ENCODE measurements at regions of chr21 and their contacts with region 1.

Region 1: GRCh38 chr21:46025113-46025770 is 43.7 kb downstream of the COL6A1 start:
- DNase-seq: no peak
- ATAC-seq: no peak

Region 2: DNA sequence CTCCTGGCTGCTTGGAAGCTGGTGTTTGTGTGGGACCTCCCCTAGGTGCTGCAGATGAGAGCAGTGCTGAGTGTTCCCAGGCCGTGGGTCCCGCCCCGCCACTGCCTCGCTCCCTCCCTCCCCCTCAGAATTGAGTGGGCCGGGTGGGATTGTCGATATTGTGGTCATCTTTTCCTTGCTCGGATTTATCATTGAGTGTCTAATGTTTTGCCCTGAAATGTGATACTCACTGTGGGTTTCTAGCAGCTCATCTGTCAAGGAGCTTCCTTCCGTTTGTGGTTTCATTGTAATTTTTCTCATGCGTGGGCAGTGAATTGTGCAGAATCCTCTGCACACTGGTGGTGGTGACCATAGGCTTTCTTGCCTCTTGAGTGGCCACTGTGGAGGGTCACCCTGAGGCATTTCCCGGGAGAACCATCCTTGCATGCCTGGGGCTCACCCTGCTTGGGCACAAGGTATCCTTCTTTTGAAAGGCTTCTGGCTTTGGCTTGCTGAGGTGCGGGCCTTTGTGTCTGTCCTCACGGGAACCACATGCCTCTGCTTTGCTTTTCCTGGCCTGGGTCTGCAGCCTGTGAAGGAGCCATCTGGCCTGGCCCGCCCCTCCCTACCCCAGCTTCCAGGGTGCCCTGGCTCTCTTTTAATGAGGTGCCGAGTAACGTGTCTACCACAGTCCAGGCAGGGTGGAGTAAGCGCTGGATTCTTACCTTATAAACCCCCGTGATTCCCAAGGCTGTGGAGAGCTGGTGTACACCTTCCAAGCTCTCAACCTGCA is 1059.8 kb before region 1 on chr21:
- intact Hi-C with region 1: loop called (anchors 5 kb)
- DNase-seq: no peak
- ATAC-seq: peak; percentile 37

Region 3: DNA sequence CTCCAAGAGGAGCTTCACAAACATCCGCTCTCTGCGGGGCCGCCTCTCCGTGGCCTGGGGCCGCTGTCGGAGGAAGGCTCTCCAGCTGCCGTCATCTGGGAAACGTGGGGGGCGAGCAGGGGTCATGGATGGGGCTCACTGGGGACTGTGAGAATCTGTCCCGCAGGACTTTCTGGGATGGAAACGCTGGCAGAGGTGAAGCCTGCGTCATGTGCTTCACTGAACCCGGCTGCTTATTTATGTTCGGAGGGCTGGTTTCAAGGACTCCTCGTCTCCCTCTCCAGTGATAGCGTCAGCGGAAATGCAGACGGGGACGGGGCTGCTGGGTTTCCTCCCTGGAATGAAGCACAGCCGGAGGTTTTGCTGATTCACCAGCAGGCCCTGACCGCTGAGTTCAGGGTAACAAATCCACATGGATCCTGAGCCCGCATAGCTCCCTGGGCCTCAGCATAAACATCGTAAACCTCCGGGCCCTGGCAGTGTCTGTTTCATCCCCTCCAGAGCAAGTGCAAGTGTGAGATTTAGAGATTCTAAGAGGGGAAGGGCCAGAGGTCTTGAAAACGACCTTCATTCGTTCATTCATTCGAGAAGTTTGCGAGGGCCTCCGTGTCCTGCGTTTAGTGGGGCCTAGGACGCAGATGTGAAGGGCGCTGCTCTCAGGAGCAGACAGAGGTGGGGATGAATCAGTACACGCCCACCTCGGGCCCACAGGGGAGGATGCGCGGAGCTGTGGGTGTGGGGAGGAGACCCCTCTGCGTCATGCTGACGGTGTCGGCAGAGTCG is 730.5 kb before region 1 on chr21:
- intact Hi-C with region 1: no loop called
- DNase-seq: peak; percentile 88
- ATAC-seq: peak; percentile 83

Region 4: GRCh38 chr21:45950734-45951515 is 74.3 kb before region 1 on chr21:
- intact Hi-C with region 1: no loop called
- DNase-seq: no peak
- ATAC-seq: peak; percentile 45

Measured in sciatic nerve (tissue), 2 donors.